ENCODE measurements at regions of chr10 and their contacts with region 1.

Region 1: DNA sequence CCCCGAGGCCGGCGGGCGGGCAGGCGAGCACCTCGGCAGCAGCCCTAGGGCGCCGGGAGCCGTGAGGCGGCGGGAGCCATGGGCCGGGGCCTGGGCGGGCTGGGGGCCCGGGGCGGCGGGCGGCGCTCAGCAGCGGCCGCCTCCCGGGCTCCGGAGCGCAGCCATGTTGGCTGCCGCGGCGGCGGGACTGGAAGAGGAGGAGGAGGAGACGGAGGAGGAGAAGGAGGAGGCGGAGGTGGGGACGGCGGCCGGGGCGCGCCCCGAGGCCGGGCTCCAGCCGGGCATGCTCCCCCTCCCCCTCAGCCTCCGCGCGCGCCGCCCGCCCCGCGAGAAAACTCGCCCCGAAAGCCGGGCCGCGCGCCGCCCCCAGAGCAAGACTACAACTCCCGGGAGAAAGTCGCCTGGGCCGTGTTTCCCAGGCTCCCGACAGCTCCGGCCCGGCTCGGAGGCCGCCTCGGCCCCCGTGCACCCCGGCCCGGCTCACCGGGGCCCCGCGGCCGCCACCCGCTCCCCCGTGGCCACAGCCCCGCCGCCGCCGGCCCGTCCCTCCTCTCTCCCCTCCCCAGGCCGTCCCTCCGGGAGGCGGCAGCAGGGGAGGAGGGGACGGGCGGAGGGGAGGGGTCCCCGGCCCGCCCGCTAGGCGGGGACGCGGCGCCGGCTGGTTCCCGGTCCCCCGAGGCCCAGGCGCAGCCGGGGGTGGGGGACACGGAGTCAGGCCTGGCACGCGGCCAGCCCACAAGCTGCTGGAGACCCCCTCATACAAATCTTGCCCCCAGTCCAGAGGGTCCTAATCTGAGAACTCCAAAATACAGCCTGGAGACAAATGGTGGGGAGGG is at the start of gene DLG5:
- DNase-seq: peak; percentile 80
- ATAC-seq: peak; percentile 86
- total RNA-seq, gene DLG5: 8.9 TPM

Region 2: DNA sequence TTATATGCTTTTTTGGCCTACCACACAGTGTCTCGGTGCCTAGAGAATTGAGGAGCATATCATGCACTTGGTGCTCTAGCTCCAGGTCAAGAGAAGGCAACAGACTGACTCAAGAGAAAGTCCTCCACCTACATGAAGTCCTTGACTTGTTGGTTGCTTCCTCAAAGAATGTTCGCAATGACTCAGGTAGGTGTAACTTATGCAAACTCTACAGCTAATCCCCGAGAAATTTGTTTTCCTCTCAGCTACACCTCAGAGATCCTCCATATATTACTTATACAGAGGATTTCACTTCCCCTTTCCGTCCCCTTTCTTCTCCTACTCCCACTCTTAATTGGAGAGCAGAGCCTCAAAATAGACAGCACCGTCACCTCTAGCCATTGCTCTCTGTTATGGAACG is 1302.3 kb before region 1 on chr10:
- intact Hi-C with region 1: no loop called
- DNase-seq: no peak
- ATAC-seq: no peak

Region 3: DNA sequence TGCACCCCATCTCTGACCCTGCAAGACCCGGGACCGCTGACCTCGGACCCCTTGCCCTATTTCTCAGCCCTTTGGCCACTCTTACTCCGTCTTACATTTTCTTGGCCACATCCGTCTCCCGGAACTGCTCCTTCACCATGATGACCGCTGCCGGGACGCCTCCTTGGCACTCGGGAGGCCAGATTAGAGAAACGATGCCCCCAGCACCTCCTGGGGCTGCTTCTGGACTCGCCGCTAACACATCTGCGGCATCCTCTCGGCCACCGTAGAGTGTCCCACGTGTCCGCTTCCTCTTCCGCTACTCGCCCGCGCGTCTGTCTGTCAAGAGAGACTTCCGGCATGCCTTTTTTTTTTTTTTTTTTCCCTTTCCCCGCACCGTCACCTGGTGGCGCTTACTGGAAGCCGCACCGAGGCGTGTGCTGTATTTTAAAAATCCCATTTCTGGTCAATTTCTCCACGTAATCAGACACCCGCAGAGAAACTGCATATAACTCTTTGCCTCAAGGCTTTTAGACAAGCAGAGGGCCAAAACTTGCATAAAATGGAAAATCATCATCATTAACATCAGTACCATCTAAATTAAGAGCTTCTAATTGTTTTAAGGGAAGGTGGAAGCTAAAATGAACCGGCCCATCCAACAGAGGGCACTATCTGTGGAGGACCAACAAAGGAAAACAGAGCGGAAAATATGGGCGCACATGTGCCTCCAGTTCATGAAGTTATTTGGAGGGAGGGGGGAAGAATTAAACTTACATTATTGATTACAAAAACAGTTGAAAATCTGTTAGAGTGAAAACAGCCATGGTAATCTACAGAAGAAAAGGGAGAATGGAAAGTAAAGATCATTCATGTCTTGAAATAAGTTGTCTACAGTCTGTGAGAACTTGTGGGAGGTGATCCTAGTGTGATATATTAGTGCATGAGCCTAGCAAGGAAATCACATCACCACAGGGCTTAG is 102.8 kb after region 1 on chr10 and contains the start of gene POLR3A:
- intact Hi-C with region 1: loop called (anchors 5 kb)
- DNase-seq: peak; percentile 98
- ATAC-seq: peak; percentile 77
- total RNA-seq, gene POLR3A: 8.2 TPM